ENCODE measurements at regions of chr10 and their contacts with region 1.

Region 1: DNA sequence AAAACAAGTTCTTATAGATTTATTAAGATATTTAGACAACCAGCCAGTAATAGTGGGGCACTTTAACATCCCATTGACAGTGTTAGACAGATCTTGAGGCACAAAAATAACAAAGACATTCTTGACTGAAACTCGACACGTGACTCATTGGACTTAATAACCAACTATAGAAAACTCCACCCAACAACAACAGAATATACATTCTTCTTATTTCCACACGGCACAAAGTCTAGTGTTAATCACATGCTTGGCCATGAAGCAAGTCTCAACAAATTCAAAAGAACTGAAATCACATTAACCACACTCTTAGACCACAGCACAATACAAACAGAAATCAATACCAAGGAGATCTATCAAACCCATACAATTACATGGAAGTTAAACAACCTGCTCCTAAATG is 138.1 kb downstream of the ARL5B start:
- DNase-seq: no peak
- H3K4me3 ChIP-seq: no peak overlapping the region
- H3K27ac ChIP-seq: no peak overlapping the region
- H3K4me1 ChIP-seq: no peaks in the 10 kb centered on the region
- H3K27me3 ChIP-seq: no peaks in the 10 kb centered on the region
- CTCF ChIP-seq: no peak

Region 2: DNA sequence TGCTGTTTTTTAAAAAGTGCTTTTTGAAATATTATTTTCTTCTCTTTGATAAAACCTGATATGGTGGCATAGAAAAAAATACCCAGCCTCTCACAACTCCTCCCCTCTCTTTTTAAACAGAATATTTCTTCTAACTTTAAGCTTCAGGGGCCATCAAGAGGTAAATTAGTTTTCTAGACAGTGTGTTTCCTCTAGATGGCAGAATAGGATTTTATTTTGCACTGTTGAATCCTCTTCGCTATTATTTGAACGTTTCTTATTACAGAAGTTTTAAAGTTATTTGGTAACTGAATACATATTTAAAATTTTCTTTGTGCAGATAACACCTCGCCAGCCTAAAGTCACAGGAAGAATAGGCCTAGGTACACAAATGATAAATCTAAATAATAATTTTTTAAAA is 107.8 kb before region 1 on chr10:
- CTCF ChIA-PET with region 1: no interaction called
- POLR2A ChIA-PET with region 1: no interaction called
- intact Hi-C with region 1: no loop called
- DNase-seq: no peak
- H3K4me3 ChIP-seq: no peak overlapping the region
- H3K27ac ChIP-seq: no peak overlapping the region
- H3K4me1 ChIP-seq: no peaks in the 10 kb centered on the region
- H3K27me3 ChIP-seq: no peaks in the 10 kb centered on the region
- CTCF ChIP-seq: peak; percentile 54; the same call in 1 of the 2 replicates

Region 3: DNA sequence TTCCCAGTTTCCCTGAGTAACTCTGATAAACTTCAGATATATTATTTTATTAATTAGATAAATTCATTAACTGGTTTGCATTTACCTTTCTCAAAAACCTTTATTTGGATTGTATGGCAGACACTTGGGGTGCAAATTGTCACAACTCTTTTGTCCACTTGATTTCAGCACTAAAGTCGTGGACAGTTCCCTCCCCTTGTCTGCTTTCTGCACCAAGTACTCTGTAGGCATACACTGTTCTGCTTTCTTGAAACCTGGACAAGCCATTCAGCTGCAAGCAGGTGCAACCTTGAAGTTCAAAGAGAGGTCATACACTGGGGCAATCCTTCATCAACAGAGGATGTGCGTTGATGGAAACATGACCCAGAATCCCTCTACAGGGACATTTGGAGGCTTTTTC is 24.9 kb after region 1 on chr10:
- CTCF ChIA-PET with region 1: no interaction called
- POLR2A ChIA-PET with region 1: no interaction called
- intact Hi-C with region 1: loop called (anchors 2 kb)
- DNase-seq: no peak
- H3K4me3 ChIP-seq: no peak overlapping the region
- H3K27ac ChIP-seq: no peak overlapping the region
- H3K4me1 ChIP-seq: no peaks in the 10 kb centered on the region
- H3K27me3 ChIP-seq: no peaks in the 10 kb centered on the region
- CTCF ChIP-seq: no peak